T-cell (primary cell): ENCODE measurements at regions of chr5 and their contacts with region 1.

Region 1: DNA sequence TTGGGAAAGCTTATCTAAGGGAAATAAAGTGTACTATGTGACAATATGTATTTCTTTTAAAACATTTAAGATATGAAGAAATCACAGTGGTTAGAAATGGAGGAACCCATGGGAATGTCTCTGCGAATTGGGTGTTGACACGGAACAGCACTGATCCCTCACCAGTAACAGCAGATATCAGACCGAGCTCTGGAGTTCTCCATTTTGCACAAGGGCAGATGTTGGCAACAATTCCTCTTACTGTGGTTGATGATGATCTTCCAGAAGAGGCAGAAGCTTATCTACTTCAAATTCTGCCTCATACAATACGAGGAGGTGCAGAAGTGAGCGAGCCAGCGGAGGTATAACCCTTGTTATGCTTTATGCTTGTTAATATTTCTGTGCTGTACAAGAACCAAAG is 69.9 kb downstream of the ADGRV1 start:
- DNase-seq: no peak
- ATAC-seq: no peak
- H3K4me3 ChIP-seq: no peak overlapping the region
- H3K4me3 Mint-ChIP-seq: no peak overlapping the region
- H3K27ac ChIP-seq: no peak overlapping the region
- H3K27ac Mint-ChIP-seq: no peak overlapping the region
- H3K4me1 ChIP-seq: no peaks in the 10 kb centered on the region
- H3K4me1 Mint-ChIP-seq: no peaks in the 10 kb centered on the region
- H3K27me3 ChIP-seq: no peaks in the 10 kb centered on the region
- H3K27me3 Mint-ChIP-seq: no peaks in the 10 kb centered on the region

Region 2: DNA sequence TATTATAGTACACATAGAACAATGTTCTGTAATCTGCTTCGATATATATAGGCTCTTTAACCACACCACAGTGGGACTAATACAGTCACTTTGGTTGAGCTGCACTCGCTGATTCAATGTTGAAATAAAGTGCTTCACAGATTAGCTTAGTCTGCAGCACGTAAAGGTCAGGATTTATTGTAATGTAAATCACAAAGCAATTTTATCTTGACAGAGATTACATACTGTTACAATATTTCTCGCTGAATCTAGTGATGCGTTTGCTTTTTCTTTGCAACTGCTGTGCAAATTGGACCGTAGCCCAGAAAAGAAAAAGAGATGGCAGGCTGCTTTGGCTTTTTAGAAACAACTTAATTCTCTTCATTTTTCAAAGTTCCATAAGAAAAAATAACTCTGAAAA is 271.9 kb before region 1 on chr5:
- CTCF ChIA-PET with region 1: no interaction called
- POLR2A ChIA-PET with region 1: interaction called in 1 of 2 experiments, 12 read pairs
- DNase-seq: no peak
- ATAC-seq: no peak
- H3K4me3 ChIP-seq: no peak overlapping the region
- H3K4me3 Mint-ChIP-seq: no peak overlapping the region
- H3K27ac ChIP-seq: no peak overlapping the region
- H3K27ac Mint-ChIP-seq: no peak overlapping the region
- H3K4me1 ChIP-seq: no peaks in the 10 kb centered on the region
- H3K4me1 Mint-ChIP-seq: no peaks in the 10 kb centered on the region
- H3K27me3 ChIP-seq: no peaks in the 10 kb centered on the region
- H3K27me3 Mint-ChIP-seq: peaks cover 7 to 18% of the 10 kb centered on the region in 2 donors

Region 3: GRCh38 chr5:90558344-90559192 is 69.9 kb before region 1 on chr5 and contains the start of gene ADGRV1:
- CTCF ChIA-PET with region 1: no interaction called
- POLR2A ChIA-PET with region 1: no interaction called
- DNase-seq: no peak
- ATAC-seq: peak; percentile 20 to 62 (median 37)
- H3K4me3 ChIP-seq: peak within 1 kb of the TSS; percentile 10 to 57
- H3K4me3 Mint-ChIP-seq: peak within 1 kb of the TSS; percentile 39 to 60 (median 41)
- H3K27ac ChIP-seq: no peak within 1 kb of the TSS
- H3K27ac Mint-ChIP-seq: peak within 1 kb of the TSS in 1 of 2 donors; percentile 67
- H3K4me1 ChIP-seq: peaks cover 0 to 7% of the 10 kb centered on the region in 2 experiments
- H3K4me1 Mint-ChIP-seq: peaks cover 10 to 12% (median 11%) of the 10 kb centered on the region in 3 donors
- H3K27me3 ChIP-seq: peaks cover 15 to 24% of the 10 kb centered on the region in 2 experiments
- H3K27me3 Mint-ChIP-seq: peaks cover 50 to 60% of the 10 kb centered on the region in 2 donors
- total RNA-seq, gene ADGRV1: 0.68 to 1.6 (median 1.2) TPM in 4 of 5 donors, not detected in the other